Right ventricle myocardium inferior (tissue), 1 donor: ENCODE measurements at regions of chr10 and their contacts with region 1.

Region 1: DNA sequence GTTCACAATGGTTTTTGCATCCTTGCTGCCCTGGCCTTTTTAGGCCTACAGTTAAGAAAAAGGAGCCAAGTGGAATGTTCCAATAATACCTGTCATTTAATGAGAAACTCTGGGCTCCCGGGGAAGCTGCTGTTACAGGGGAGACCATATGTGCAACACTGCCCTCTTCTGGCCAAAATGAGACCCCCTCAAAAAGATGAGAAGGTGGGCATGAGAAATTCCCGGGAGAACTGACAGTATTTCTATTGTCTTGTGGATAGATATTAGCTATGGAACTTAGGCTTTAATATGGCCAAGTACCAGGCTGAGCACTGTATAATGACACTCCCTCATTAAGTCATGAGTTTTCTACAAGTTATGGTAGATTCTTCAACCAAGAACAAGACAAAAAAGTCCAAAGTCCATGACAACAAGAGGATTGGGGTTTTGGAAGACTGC is 99.4 kb downstream of the CCDC3 start:
- DNase-seq: no peak
- ATAC-seq: no peak

Region 2: DNA sequence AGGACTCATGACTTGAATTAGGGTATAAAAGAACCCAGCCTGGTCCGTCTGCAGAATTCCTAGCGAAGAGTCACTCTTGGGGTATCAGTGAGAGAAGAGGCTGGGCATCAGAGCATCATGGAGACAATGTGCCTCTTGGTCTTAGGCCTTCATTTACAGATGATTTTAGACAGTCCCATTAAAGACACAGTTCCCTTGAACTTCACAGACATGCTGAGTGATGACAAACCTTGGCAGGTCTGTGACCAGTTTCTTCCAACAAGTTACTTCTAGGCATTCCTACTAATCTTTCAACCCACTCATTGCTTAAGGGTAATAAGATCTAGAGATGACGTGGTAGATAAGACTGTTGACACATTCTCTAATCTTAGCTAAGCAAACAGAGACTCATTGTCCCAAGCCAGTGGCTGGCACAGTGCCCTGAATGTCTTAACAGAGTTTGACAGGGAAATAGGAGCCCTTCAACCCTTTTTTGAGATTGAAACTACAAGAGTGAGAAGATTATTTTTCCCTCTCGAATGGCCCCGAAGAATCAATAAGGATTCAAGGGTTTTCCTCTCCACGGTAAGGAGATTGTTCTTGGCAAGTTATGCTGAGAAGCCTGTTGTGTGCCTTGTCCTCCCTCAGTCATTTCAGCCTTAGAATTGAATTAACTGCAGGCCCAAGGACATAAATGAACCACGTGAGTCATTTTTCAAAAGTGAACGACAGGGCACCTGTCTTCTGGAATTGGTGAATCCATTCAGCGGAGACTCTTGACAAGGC is 181.8 kb before region 1 on chr10:
- intact Hi-C with region 1: loop called (anchors 2 kb)
- DNase-seq: peak; percentile 86
- ATAC-seq: peak; percentile 88

Region 3: DNA sequence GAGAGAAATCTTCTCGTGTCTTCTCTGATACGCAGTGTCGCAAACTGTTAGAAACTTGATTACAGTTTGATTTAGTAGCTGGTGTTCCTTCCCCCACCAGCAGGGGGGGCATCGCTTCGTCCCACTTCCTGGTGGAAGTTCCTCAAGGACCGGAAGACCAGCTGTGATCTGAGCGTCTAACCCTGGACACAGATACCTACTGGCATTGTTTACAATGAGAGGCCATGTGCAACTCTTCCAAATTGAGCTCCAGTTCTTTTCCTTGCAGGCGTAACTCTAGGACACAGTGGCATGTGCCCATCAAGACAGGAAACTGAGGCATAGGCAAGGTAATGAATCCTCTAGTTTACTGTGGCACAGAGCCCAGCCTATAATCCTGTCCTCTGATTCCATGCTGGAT is 119.6 kb before region 1 on chr10:
- intact Hi-C with region 1: loop called (anchors 1 kb)
- DNase-seq: no peak
- ATAC-seq: no peak

Region 4: GRCh38 chr10:12795315-12796110 is 106.6 kb before region 1 on chr10:
- intact Hi-C with region 1: no loop called
- DNase-seq: peak; percentile 51
- ATAC-seq: peak; percentile 68

Region 5: GRCh38 chr10:13074561-13075451 is 172.7 kb after region 1 on chr10:
- intact Hi-C with region 1: loop called (anchors 5 kb)
- DNase-seq: no peak
- ATAC-seq: peak; percentile 76